CD8-positive, alpha-beta memory T cell (primary cell): ENCODE measurements at regions of chr19 and their contacts with region 1.

Region 1: GRCh38 chr19:46265217-46265828 is 31.5 kb upstream of the HIF3A start:
- DNase-seq: peak; percentile 44 to 76 (median 67)
- H3K4me3 ChIP-seq: no peak overlapping the region
- H3K4me3 Mint-ChIP-seq: no peak overlapping the region
- H3K27ac ChIP-seq: no peak overlapping the region
- H3K27ac Mint-ChIP-seq: peak overlapping the region in 1 of 8 donors; percentile 24
- H3K4me1 ChIP-seq: peaks cover 16% of the 10 kb centered on the region
- H3K4me1 Mint-ChIP-seq: peaks cover 20 to 34% (median 27%) of the 10 kb centered on the region in 3 donors
- H3K27me3 ChIP-seq: peaks cover 19% of the 10 kb centered on the region
- H3K27me3 Mint-ChIP-seq: peaks cover 23 to 47% of the 10 kb centered on the region in 2 donors

Region 2: DNA sequence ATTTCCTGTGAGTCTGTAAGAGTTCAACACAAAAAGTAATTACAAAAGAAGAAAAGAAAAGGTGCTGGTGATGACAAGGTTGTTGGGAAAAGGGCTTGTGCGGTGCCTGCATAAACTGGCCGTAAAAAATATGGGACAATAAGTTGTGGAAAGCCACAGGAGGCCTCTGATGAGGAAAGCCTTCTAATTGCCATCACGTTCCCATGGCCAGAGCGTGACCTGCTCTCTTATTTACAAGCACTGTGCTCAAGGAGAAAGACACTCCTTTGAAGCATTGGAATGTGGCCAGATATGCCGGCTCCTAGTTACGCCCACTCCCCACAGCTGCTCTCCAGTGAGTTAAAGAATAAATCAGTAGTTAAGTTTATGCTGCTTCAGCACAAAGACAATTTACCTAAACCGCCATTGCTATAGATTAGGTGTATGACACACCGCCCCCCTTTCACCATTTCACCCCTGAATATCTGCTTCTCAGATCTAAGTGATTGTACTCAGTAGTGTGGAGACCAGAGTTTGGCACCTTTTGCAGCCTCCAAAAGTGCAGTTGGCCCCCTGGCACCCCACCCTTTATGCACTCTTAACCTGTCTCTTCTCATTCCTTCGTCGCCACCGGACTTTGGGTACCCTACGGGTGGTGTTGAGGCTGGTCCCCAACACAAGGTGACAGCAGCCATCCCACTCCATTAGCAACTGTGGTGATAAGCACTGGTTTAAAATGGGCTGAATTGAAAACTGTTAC is 234.3 kb before region 1 on chr19:
- CTCF ChIA-PET with region 1: interaction called, 93 read pairs
- POLR2A ChIA-PET with region 1: no interaction called
- DNase-seq: no peak
- H3K4me3 ChIP-seq: no peak overlapping the region
- H3K4me3 Mint-ChIP-seq: no peak overlapping the region
- H3K27ac ChIP-seq: no peak overlapping the region
- H3K27ac Mint-ChIP-seq: no peak overlapping the region
- H3K4me1 ChIP-seq: peaks cover 10% of the 10 kb centered on the region
- H3K4me1 Mint-ChIP-seq: peaks cover 10 to 15% (median 11%) of the 10 kb centered on the region in 3 donors
- H3K27me3 ChIP-seq: no peaks in the 10 kb centered on the region
- H3K27me3 Mint-ChIP-seq: peaks cover 19 to 44% of the 10 kb centered on the region in 2 donors

Region 3: GRCh38 chr19:46392243-46392801 is 127.0 kb after region 1 on chr19:
- CTCF ChIA-PET with region 1: no interaction called
- POLR2A ChIA-PET with region 1: interaction called, 15 read pairs
- DNase-seq: no peak
- H3K4me3 ChIP-seq: no peak overlapping the region
- H3K4me3 Mint-ChIP-seq: no peak overlapping the region
- H3K27ac ChIP-seq: no peak overlapping the region
- H3K27ac Mint-ChIP-seq: peak overlapping the region in 1 of 8 donors; percentile 59
- H3K4me1 ChIP-seq: no peaks in the 10 kb centered on the region
- H3K4me1 Mint-ChIP-seq: peaks cover 3 to 10% (median 9%) of the 10 kb centered on the region in 3 donors
- H3K27me3 ChIP-seq: no peaks in the 10 kb centered on the region
- H3K27me3 Mint-ChIP-seq: no peaks in the 10 kb centered on the region